ENCODE measurements at regions of chr17 and their contacts with region 1.

Region 1: GRCh38 chr17:3865176-3865575 is 19.1 kb upstream of the NCBP3 start:
- DNase-seq: no peak
- H3K4me3 ChIP-seq: no peak overlapping the region
- H3K27ac ChIP-seq: no peak overlapping the region
- H3K27me3 ChIP-seq: no peaks in the 10 kb centered on the region
- CTCF ChIP-seq: no peak

Region 2: DNA sequence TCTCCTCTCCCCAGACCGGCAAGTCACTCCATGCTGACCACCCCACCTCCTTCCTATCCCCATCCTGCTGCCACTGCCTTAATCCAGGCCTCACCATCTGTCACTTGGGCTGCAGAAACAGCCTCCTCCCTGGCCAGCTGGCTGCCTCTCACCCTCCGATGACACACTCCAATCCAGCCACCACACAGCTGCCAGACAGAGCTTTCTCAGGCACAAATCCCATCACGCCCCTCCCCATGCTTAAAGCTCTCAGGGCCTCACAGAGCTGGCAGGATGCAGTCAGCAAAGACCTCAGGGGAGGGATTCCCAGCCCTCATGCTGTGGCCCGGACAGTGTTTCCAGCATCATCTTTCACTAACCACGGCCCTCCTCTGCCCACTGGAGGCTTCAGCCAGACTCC is 14.0 kb after region 1 on chr17:
- CTCF ChIA-PET with region 1: interaction called, 13 read pairs
- POLR2A ChIA-PET with region 1: no interaction called
- DNase-seq: no peak
- H3K4me3 ChIP-seq: no peak overlapping the region
- H3K27ac ChIP-seq: no peak overlapping the region
- H3K27me3 ChIP-seq: no peaks in the 10 kb centered on the region
- CTCF ChIP-seq: no peak

Region 3: GRCh38 chr17:3986270-3986938 is 121.2 kb after region 1 on chr17:
- CTCF ChIA-PET with region 1: no interaction called
- POLR2A ChIA-PET with region 1: no interaction called
- DNase-seq: no peak
- H3K4me3 ChIP-seq: no peak overlapping the region
- H3K27ac ChIP-seq: no peak overlapping the region
- H3K27me3 ChIP-seq: peaks cover 9% of the 10 kb centered on the region
- CTCF ChIP-seq: no peak